CD8-positive, alpha-beta T cell (primary cell): ENCODE measurements at regions of chr11 and their contacts with region 1.

Region 1: GRCh38 chr11:23134627-23135026 is 274.4 kb upstream of the CCDC179 start:
- DNase-seq: no peak
- ATAC-seq: no peak
- H3K4me3 ChIP-seq: no peak overlapping the region
- H3K4me3 Mint-ChIP-seq: no peak overlapping the region
- H3K27ac ChIP-seq: no peak overlapping the region
- H3K27ac Mint-ChIP-seq: no peak overlapping the region
- H3K4me1 ChIP-seq: no peaks in the 10 kb centered on the region
- H3K4me1 Mint-ChIP-seq: no peaks in the 10 kb centered on the region
- H3K27me3 ChIP-seq: no peaks in the 10 kb centered on the region
- H3K27me3 Mint-ChIP-seq: no peaks in the 10 kb centered on the region
- CTCF ChIP-seq: no peak

Region 2: GRCh38 chr11:23041001-23041503 is 93.6 kb before region 1 on chr11:
- CTCF ChIA-PET with region 1: no interaction called
- POLR2A ChIA-PET with region 1: no interaction called
- intact Hi-C with region 1: no loop called
- DNase-seq: no peak
- ATAC-seq: no peak
- H3K4me3 ChIP-seq: no peak overlapping the region
- H3K4me3 Mint-ChIP-seq: no peak overlapping the region
- H3K27ac ChIP-seq: no peak overlapping the region
- H3K27ac Mint-ChIP-seq: no peak overlapping the region
- H3K4me1 ChIP-seq: no peaks in the 10 kb centered on the region
- H3K4me1 Mint-ChIP-seq: no peaks in the 10 kb centered on the region
- H3K27me3 ChIP-seq: no peaks in the 10 kb centered on the region
- H3K27me3 Mint-ChIP-seq: no peaks in the 10 kb centered on the region
- CTCF ChIP-seq: no peak

Region 3: DNA sequence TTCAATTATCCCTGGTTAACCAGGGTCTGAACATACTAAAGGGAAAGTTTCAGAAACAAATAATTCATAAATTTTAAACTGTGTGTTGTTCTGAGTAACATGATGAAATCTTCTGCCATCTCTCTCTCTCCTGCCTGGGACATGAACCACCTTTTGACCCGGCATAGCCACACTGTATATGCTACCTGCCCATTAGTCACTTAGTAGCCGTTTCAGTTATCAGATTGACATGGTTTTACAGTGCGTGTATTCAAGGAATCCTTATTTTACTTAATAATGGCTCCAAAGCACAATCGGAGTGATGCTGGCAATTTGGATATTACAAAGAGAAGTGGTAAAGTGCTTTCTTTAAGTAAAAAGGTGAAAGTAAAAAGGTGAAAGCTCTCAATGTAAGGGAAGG is 47.2 kb before region 1 on chr11:
- CTCF ChIA-PET with region 1: no interaction called
- POLR2A ChIA-PET with region 1: no interaction called
- intact Hi-C with region 1: loop called in 1 of 2 experiments (anchors 1 kb)
- DNase-seq: no peak
- ATAC-seq: no peak
- H3K4me3 ChIP-seq: no peak overlapping the region
- H3K4me3 Mint-ChIP-seq: no peak overlapping the region
- H3K27ac ChIP-seq: no peak overlapping the region
- H3K27ac Mint-ChIP-seq: no peak overlapping the region
- H3K4me1 ChIP-seq: no peaks in the 10 kb centered on the region
- H3K4me1 Mint-ChIP-seq: no peaks in the 10 kb centered on the region
- H3K27me3 ChIP-seq: no peaks in the 10 kb centered on the region
- H3K27me3 Mint-ChIP-seq: no peaks in the 10 kb centered on the region
- CTCF ChIP-seq: no peak